ENCODE measurements at regions of chr4 and their contacts with region 1.

Region 1: GRCh38 chr4:156968479-156968984 is 3.1 kb downstream of the PDGFC start:
- DNase-seq: no peak

Region 2: GRCh38 chr4:156475322-156475721 is 493.2 kb before region 1 on chr4:
- intact Hi-C with region 1: loop called (anchors 5 kb)
- DNase-seq: no peak

Region 3: DNA sequence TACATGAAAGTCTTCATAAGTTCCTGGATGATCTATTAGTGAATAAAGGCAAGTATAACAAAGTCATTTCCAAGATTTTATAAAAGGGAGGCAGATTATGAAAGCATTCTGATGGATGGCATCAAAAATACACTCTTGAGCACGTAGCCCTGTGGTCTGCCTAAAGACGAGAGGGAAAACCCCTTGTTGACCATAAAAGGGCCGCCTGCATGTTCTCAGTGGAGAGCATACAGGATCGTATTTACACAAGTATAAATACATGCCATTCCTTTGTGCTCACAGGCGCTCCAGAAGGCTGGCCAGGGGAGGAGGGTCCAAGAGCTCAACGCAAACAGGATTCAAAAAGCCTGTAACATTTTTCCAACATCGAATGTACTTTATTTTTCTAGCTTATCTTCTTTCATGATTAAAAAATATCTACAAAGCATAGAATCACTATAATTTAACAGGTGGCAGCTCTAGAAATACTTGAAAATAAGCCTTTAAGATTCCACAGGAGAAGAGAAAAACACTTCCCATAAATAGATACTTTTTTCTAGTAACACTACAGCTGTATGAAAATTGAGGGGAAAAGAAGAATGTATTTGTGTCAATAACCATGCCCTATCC is 26.5 kb before region 1 on chr4:
- intact Hi-C with region 1: loop called (anchors 2 kb)
- DNase-seq: no peak

Region 4: GRCh38 chr4:157045507-157046127 is 77.1 kb after region 1 on chr4:
- intact Hi-C with region 1: loop called (anchors 5 kb)
- DNase-seq: no peak